Activated T-helper 1 cell treated with anti-CD3 and anti-CD28 coated beads, Interleukin-12 subunit alpha, Interleukin-12 subunit beta, Interleukin-2, Interleukin-4 antibody, amounts not matched to agents 30 ng/mL and 10 ng/mL and 1 ng/mL, durations not matched to agents 14 hours and 24 hours and 36 hours (primary cell): ENCODE measurements at regions of chr6 and their contacts with region 1.

Region 1: DNA sequence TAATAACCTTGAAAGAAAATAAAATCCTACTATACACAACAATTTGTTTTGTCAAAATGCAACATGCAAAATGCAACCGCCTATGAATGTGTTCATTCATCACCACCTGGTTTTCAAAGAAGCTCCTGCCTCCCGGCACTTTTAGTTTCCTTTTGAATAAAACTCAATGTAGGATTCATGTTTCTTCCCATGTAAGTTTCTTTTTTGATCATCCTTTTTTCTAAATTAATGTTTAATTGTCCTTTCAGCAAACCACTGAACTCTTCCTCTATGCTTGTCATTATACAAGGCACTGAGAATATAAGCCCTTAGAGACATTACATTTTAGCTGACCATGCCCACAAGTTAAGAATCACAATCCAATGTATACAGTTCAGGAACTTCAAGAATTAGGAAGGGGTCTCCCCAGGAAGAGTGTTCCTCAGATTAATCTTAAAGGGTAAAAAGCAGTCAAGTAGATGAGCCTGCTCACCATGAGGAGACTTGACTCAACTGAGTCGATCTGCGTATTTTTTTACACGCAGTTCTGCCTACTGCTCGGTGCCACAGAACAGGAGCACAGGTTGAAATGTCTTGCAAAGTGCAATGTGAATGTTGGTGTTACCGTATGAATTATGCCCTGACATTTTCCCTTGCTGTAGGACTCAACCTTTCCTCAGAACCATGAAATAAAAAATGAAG is 7.2 kb upstream of the THEMIS start:
- DNase-seq: no peak
- H3K4me3 Mint-ChIP-seq: peak overlapping the region; percentile 66
- H3K27ac Mint-ChIP-seq: peak overlapping the region; percentile 82
- H3K4me1 Mint-ChIP-seq: peaks cover 45% of the 10 kb centered on the region
- H3K27me3 Mint-ChIP-seq: no peaks in the 10 kb centered on the region

Region 2: GRCh38 chr6:127879685-127880084 is 28.4 kb before region 1 on chr6:
- intact Hi-C with region 1: loop called (anchors 1 kb)
- DNase-seq: no peak
- H3K4me3 Mint-ChIP-seq: peak overlapping the region; percentile 60
- H3K27ac Mint-ChIP-seq: peak overlapping the region; percentile 56
- H3K4me1 Mint-ChIP-seq: peaks cover 65% of the 10 kb centered on the region
- H3K27me3 Mint-ChIP-seq: no peaks in the 10 kb centered on the region

Region 3: GRCh38 chr6:127918506-127919427 is 10.7 kb after region 1 on chr6:
- intact Hi-C with region 1: loop called (anchors 1 kb)
- DNase-seq: no peak
- H3K4me3 Mint-ChIP-seq: peak overlapping the region; percentile 71
- H3K27ac Mint-ChIP-seq: peak overlapping the region; percentile 61
- H3K4me1 Mint-ChIP-seq: peaks cover 67% of the 10 kb centered on the region
- H3K27me3 Mint-ChIP-seq: no peaks in the 10 kb centered on the region

Region 4: GRCh38 chr6:127924440-127924839 is 16.3 kb after region 1 on chr6:
- intact Hi-C with region 1: loop called (anchors 1 kb)
- DNase-seq: no peak
- H3K4me3 Mint-ChIP-seq: no peak overlapping the region
- H3K27ac Mint-ChIP-seq: peak overlapping the region; percentile 14
- H3K4me1 Mint-ChIP-seq: peaks cover 55% of the 10 kb centered on the region
- H3K27me3 Mint-ChIP-seq: no peaks in the 10 kb centered on the region

Region 5: DNA sequence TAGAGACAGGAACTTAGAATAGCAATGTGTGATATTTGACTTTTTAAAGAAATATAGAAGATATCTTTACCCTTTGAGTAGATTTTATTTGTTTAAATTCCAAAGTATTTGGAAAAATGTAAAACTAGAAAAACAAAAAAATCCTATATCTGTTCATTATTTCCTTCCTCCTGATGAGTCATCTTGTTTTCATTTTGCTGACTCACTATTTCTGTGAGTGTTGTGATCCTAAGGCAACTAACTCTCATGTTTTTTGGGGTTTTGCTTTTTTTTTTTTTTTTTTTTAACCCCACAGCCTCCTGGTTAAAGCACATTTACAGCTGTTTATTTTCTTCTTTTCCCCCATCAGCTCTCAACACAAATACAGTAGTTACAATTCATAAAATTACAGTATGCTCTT is 30.6 kb after region 1 on chr6:
- intact Hi-C with region 1: loop called (anchors 1 kb)
- DNase-seq: no peak
- H3K4me3 Mint-ChIP-seq: no peak overlapping the region
- H3K27ac Mint-ChIP-seq: peak overlapping the region; percentile 87
- H3K4me1 Mint-ChIP-seq: peaks cover 51% of the 10 kb centered on the region
- H3K27me3 Mint-ChIP-seq: no peaks in the 10 kb centered on the region

Region 6: GRCh38 chr6:127951172-127951917 is 43.2 kb after region 1 on chr6:
- intact Hi-C with region 1: loop called (anchors 2 kb)
- DNase-seq: no peak
- H3K4me3 Mint-ChIP-seq: peak overlapping the region; percentile 32
- H3K27ac Mint-ChIP-seq: peak overlapping the region; percentile 85
- H3K4me1 Mint-ChIP-seq: peaks cover 43% of the 10 kb centered on the region
- H3K27me3 Mint-ChIP-seq: no peaks in the 10 kb centered on the region

Region 7: DNA sequence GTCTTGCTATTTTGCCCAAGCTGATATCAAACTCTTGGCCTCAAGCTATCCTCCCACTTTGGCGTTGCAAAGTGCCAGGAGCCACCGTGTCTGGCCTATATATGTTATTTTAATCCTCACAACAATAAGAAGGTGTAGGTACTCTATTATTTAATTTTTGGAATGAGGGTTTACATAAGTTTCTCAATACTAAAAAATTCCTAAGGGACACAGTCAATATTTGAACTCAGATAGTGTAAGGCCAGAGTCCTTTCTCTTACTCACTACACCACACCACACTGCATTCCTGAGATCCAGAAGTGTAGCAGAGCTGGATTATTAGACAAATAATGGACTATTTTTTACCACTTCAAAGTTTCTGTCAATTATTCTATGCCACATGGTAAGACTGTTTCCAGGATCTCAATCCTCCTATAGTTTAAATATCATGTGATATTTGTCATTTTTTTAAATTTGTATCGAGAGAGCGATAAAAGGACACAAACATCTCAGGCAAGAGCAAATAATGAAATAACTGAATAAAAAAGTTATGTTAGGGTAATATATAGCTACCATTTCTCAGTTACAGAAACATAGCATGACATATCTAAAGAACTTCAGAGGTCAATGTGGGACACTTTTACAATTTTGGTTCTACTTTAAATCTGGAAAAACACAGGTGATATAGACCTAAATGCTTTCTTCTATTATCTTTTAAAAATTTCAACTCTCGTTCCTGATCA is 154.9 kb after region 1 on chr6:
- intact Hi-C with region 1: no loop called
- DNase-seq: no peak
- H3K4me3 Mint-ChIP-seq: no peak overlapping the region
- H3K27ac Mint-ChIP-seq: no peak overlapping the region
- H3K4me1 Mint-ChIP-seq: no peaks in the 10 kb centered on the region
- H3K27me3 Mint-ChIP-seq: no peaks in the 10 kb centered on the region

Region 8: GRCh38 chr6:128225610-128226009 is 317.5 kb after region 1 on chr6:
- intact Hi-C with region 1: no loop called
- DNase-seq: no peak
- H3K4me3 Mint-ChIP-seq: no peak overlapping the region
- H3K27ac Mint-ChIP-seq: no peak overlapping the region
- H3K4me1 Mint-ChIP-seq: no peaks in the 10 kb centered on the region
- H3K27me3 Mint-ChIP-seq: peaks cover 2% of the 10 kb centered on the region